ENCODE measurements at regions of chr2 and their contacts with region 1.

Region 1: DNA sequence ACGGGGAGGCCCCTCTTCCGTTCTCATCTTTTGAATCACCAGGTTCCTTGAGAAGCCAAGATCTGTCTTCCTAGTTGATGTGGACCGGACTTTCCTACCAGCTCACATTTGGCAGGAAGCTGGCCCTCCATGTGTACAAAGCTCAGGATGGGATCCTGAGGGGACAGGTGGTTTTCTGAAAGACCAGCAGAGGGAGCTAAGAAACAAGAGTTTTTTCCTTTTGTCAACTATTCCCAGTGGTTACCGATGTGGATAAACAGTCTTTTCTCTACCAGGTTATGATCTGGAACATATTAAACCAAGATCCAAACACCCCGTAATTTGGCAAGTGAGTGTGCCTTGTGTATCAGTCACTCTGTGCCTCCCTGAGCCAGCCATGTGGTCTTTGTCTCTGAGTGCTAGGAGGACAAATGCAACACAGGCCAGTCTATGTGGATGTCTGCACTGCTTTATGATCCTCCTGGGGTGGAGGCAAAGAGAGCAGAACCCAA is 25.1 kb upstream of the ARHGAP25 start:
- DNase-seq: peak; percentile 62 to 70
- ATAC-seq: peak; percentile 94 to 98
- H3K4me3 ChIP-seq: no peak overlapping the region
- H3K27ac ChIP-seq: no peak overlapping the region
- H3K4me1 ChIP-seq: 0 out of 3 replicates have a peak, but pooled peaks cover 4% of the 10 kb centered on the region
- CTCF ChIP-seq: peak; percentile 89
- EP300 ChIP-seq: no peak
- POLR2A ChIP-seq: no peak
- RAD21 ChIP-seq: peak; percentile 77

Region 2: GRCh38 chr2:68487773-68488355 is 221.6 kb before region 1 on chr2:
- CTCF ChIA-PET with region 1: interaction called, 18 read pairs
- POLR2A ChIA-PET with region 1: no interaction called
- DNase-seq: peak; percentile 21 to 41
- ATAC-seq: peak in 1 of 2 experiments; percentile 82; a peak in 4 of 6 replicates
- H3K4me3 ChIP-seq: no peak overlapping the region
- H3K27ac ChIP-seq: no peak overlapping the region
- H3K4me1 ChIP-seq: no peaks in the 10 kb centered on the region
- CTCF ChIP-seq: peak; percentile 71; the same call in 2 of the 3 replicates
- EP300 ChIP-seq: no peak
- POLR2A ChIP-seq: no peak
- RAD21 ChIP-seq: peak; percentile 65 to 74

Region 3: DNA sequence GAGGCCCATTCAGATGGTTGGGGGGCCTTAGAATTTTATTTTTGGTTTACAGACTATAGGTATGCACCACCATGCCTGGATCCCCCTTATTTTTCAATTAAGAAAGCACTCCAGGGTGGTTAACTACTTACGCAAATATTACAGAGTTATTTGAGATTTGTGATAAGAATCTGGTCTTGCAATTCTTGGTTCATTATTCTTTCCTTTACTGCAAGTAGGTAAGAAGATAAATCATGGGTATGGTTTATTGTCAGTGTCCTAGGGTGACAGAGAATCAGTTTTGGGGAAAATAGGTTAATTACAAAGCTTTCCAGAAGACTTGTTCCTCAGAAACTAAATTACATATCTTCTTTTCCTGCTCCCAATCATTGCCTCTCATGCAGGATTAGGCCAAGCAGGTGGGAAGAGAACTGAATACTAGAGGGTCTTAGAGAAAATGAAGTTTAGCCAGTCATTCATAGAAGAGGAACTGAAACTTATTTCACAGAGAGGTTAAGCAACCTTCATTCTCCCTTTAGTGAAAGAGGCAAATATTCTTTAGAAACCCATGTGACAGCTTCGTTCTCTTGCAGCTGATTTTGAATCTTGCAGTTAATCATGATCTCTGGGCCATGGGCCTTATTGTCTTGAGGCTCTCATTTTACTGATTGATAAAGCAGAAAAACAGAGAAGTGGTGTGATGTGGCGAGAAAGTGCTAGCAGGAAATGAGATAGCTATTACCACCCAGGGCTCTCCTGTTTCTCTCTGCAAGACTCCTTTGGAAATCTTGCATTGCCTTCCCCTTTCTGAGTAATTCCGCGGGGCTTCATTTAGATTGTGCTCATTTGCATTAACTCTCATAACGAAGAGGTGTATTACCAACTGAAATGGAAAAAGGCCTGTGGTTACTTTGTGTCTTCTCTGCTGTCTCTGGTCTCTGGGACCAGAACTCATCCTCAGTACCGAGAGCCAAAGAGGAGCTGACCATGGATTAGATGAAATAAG is 19.6 kb before region 1 on chr2:
- CTCF ChIA-PET with region 1: interaction called, 11 read pairs
- POLR2A ChIA-PET with region 1: no interaction called
- DNase-seq: no peak
- ATAC-seq: no peak
- H3K4me3 ChIP-seq: no peak overlapping the region
- H3K27ac ChIP-seq: no peak overlapping the region
- H3K4me1 ChIP-seq: no peaks in the 10 kb centered on the region
- CTCF ChIP-seq: no peak
- EP300 ChIP-seq: no peak
- POLR2A ChIP-seq: no peak
- RAD21 ChIP-seq: no peak

Region 4: GRCh38 chr2:68698567-68699377 is 10.7 kb before region 1 on chr2:
- CTCF ChIA-PET with region 1: interaction called, 11 read pairs
- POLR2A ChIA-PET with region 1: no interaction called
- DNase-seq: no peak
- ATAC-seq: no peak
- H3K4me3 ChIP-seq: no peak overlapping the region
- H3K27ac ChIP-seq: no peak overlapping the region
- H3K4me1 ChIP-seq: no peaks in the 10 kb centered on the region
- CTCF ChIP-seq: no peak
- EP300 ChIP-seq: no peak
- POLR2A ChIP-seq: no peak
- RAD21 ChIP-seq: no peak

Region 5: DNA sequence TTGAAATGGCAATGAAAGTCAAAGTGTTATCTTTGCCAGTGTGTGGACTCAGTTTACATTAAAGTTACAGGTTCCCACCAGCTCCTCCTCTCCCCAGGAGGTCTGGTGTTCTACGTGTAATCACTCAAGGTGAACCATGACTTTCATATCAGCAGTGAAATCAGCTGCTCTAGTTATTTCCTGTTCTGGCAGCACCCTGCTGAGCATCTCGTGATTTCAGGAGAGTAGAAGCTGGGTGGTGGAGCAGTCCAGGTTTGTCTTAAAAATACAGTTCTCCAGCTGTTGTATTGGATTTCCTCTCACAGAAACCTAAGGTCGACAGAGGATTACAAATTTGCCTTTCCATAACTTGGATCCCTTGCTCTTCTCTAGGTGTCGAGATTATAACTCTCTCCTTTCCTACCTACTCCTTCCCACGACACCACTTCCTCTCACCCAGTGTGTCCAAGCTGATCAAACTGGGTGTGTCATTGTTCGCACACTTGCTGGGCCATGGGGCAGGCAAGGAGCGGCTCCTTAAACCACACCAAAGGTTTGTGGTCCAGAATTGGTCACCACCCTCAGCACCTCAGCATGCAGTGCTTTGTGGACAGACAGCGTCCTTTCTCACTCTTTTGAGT is 12.1 kb after region 1 on chr2:
- CTCF ChIA-PET with region 1: interaction called, 24 read pairs
- POLR2A ChIA-PET with region 1: no interaction called
- DNase-seq: no peak
- ATAC-seq: peak in 1 of 2 experiments; percentile 16; a peak in 3 of 6 replicates
- H3K4me3 ChIP-seq: no peak overlapping the region
- H3K27ac ChIP-seq: no peak overlapping the region
- H3K4me1 ChIP-seq: 0 out of 3 replicates have a peak, but pooled peaks cover 4% of the 10 kb centered on the region
- CTCF ChIP-seq: no peak
- EP300 ChIP-seq: no peak
- POLR2A ChIP-seq: no peak
- RAD21 ChIP-seq: no peak

Region 6: GRCh38 chr2:68857855-68858456 is 148.5 kb after region 1 on chr2:
- CTCF ChIA-PET with region 1: no interaction called
- POLR2A ChIA-PET with region 1: no interaction called
- DNase-seq: no peak
- ATAC-seq: no peak
- H3K4me3 ChIP-seq: no peak overlapping the region
- H3K27ac ChIP-seq: no peak overlapping the region
- H3K4me1 ChIP-seq: no peaks in the 10 kb centered on the region
- CTCF ChIP-seq: no peak
- EP300 ChIP-seq: no peak
- POLR2A ChIP-seq: no peak
- RAD21 ChIP-seq: no peak

Region 7: GRCh38 chr2:68870215-68870614 is 160.7 kb after region 1 on chr2:
- CTCF ChIA-PET with region 1: no interaction called
- POLR2A ChIA-PET with region 1: no interaction called
- DNase-seq: no peak
- ATAC-seq: no peak
- H3K4me3 ChIP-seq: no peak overlapping the region
- H3K27ac ChIP-seq: no peak overlapping the region
- H3K4me1 ChIP-seq: no peaks in the 10 kb centered on the region
- CTCF ChIP-seq: no peak
- EP300 ChIP-seq: no peak
- POLR2A ChIP-seq: no peak
- RAD21 ChIP-seq: no peak

Region 8: GRCh38 chr2:68909793-68910674 is 200.6 kb after region 1 on chr2:
- CTCF ChIA-PET with region 1: interaction called, 19 read pairs
- POLR2A ChIA-PET with region 1: no interaction called
- DNase-seq: peak; percentile 60 to 85
- ATAC-seq: peak in 1 of 2 experiments; percentile 66; a peak in 3 of 6 replicates
- H3K4me3 ChIP-seq: no peak overlapping the region
- H3K27ac ChIP-seq: peak overlapping the region in 1 of 2 experiments; percentile 85; a peak in 4 of 6 replicates
- H3K4me1 ChIP-seq: peaks cover 25% of the 10 kb centered on the region
- CTCF ChIP-seq: peak; percentile 79
- EP300 ChIP-seq: no peak
- POLR2A ChIP-seq: no peak
- RAD21 ChIP-seq: peak; percentile 76 to 80